GM12878 (cell line): ENCODE measurements at regions of chr12 and their contacts with region 1.

Region 1: DNA sequence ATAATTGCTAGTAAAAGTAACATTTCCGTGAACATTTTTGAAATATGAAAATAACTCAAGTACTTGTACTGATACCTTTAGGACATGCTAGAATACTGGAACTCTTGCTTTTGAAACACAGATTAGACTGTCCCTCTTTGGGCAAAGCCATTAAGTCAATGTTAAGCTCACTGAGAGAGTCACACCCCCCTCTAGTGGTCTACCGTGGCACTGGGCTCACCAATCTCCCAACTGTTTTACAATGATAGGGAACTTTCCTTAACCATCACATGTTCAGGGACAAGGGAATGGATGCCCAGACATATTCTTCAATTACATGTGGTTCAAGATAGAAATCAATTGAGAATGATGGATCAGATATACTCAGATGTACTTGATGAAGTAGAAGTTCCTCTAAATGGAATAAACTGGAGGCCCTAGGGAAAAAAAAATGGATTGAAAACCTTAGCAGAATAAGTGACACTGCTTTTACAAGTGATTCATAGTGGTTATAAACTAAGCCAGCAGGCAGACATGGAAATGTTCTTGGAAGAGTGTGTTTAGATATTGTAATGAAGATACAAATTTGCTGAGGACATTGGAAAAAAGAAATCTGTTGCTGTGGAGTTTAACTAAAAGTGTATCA is 17.8 kb downstream of the NANOG start:
- DNase-seq: peak; percentile 13
- ATAC-seq: peak; percentile 89
- H3K4me3 ChIP-seq: no peak overlapping the region
- H3K27ac ChIP-seq: no peak overlapping the region
- H3K4me1 ChIP-seq: no peaks in the 10 kb centered on the region
- H3K27me3 ChIP-seq: no peaks in the 10 kb centered on the region
- CTCF ChIP-seq: peak; percentile 88 to 97 (median 91)
- EP300 ChIP-seq: no peak
- POLR2A ChIP-seq: no peak
- RAD21 ChIP-seq: peak; percentile 93

Region 2: DNA sequence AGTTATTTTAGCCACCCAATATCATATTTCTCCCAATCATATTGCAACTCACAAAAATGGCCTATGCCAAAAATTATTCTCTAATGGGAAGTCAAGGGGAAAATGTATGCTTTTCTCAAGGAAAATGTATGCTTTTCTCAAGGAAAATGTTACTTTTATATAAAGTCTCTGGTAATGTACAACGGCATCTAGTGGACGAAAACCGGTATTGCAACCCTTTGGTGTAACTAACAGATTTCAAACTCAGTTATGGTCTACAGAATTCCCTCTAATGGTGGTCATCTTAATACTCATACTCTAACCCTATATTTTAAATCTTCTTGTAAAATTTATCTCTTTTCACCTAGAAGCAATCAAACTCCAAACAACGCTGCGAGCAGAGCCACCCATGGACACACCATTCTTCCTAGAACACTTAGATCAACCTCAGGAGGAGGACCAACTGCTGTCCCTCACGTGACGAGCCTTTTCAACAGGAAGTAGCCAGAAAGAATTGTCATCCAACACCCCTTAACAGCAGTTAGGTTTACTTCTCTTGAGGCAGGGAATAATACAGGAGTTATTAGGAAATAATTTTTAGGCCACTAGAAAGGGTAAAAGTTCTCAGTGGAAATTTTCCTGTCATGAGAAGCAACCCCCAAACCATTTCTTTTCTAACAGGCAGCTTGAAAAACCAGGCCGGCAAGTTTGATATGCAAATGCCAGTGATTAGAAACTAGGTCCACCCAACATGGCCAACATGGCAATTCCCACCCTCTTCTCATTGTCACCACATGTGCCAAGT is 161.4 kb before region 1 on chr12:
- CTCF ChIA-PET with region 1: interaction called, 25 read pairs
- POLR2A ChIA-PET with region 1: no interaction called
- RAD21 ChIA-PET with region 1: interaction called, 6 read pairs
- SMC1A ChIA-PET with region 1: interaction called, 3 read pairs
- in situ Hi-C with region 1: no loop called
- intact Hi-C with region 1: loop called (anchors 10 kb)
- DNase-seq: no peak
- ATAC-seq: peak; percentile 34; the same call in 1 of the 3 replicates
- H3K4me3 ChIP-seq: no peak overlapping the region
- H3K27ac ChIP-seq: no peak overlapping the region
- H3K4me1 ChIP-seq: peaks cover 2% of the 10 kb centered on the region; the same call in 1 of the 2 replicates
- H3K27me3 ChIP-seq: no peaks in the 10 kb centered on the region
- CTCF ChIP-seq: peak; percentile 60 to 84 (median 79)
- EP300 ChIP-seq: no peak
- POLR2A ChIP-seq: no peak
- RAD21 ChIP-seq: peak; percentile 43

Region 3: GRCh38 chr12:7678738-7679137 is 128.2 kb before region 1 on chr12:
- CTCF ChIA-PET with region 1: interaction called, 27 read pairs
- POLR2A ChIA-PET with region 1: no interaction called
- RAD21 ChIA-PET with region 1: interaction called, 3 read pairs
- SMC1A ChIA-PET with region 1: interaction called, 5 read pairs
- in situ Hi-C with region 1: loop called (anchors 5 kb)
- intact Hi-C with region 1: loop called (anchors 1 kb)
- DNase-seq: no peak
- ATAC-seq: no peak
- H3K4me3 ChIP-seq: no peak overlapping the region
- H3K27ac ChIP-seq: no peak overlapping the region
- H3K4me1 ChIP-seq: no peaks in the 10 kb centered on the region
- H3K27me3 ChIP-seq: no peaks in the 10 kb centered on the region
- CTCF ChIP-seq: no peak
- EP300 ChIP-seq: no peak
- POLR2A ChIP-seq: no peak
- RAD21 ChIP-seq: no peak

Region 4: GRCh38 chr12:7716381-7716780 is 90.6 kb before region 1 on chr12:
- CTCF ChIA-PET with region 1: no interaction called
- POLR2A ChIA-PET with region 1: no interaction called
- RAD21 ChIA-PET with region 1: interaction called, 4 read pairs
- SMC1A ChIA-PET with region 1: no interaction called
- in situ Hi-C with region 1: no loop called
- intact Hi-C with region 1: loop called (anchors 5 kb)
- DNase-seq: no peak
- ATAC-seq: no peak
- H3K4me3 ChIP-seq: no peak overlapping the region
- H3K27ac ChIP-seq: no peak overlapping the region
- H3K4me1 ChIP-seq: no peaks in the 10 kb centered on the region
- H3K27me3 ChIP-seq: no peaks in the 10 kb centered on the region
- CTCF ChIP-seq: peak in 2 of 3 experiments; percentile 19 to 33; a peak in 3 of 6 replicates
- EP300 ChIP-seq: no peak
- POLR2A ChIP-seq: no peak
- RAD21 ChIP-seq: peak; percentile 49

Region 5: GRCh38 chr12:7731486-7731885 is 75.5 kb before region 1 on chr12:
- CTCF ChIA-PET with region 1: no interaction called
- POLR2A ChIA-PET with region 1: no interaction called
- RAD21 ChIA-PET with region 1: no interaction called
- SMC1A ChIA-PET with region 1: no interaction called
- in situ Hi-C with region 1: no loop called
- intact Hi-C with region 1: no loop called
- DNase-seq: no peak
- ATAC-seq: no peak
- H3K4me3 ChIP-seq: no peak overlapping the region
- H3K27ac ChIP-seq: no peak overlapping the region
- H3K4me1 ChIP-seq: no peaks in the 10 kb centered on the region
- H3K27me3 ChIP-seq: no peaks in the 10 kb centered on the region; a peak in 1 of 4 replicates
- CTCF ChIP-seq: no peak
- EP300 ChIP-seq: no peak
- POLR2A ChIP-seq: no peak
- RAD21 ChIP-seq: no peak

Region 6: GRCh38 chr12:7832059-7832696 is 25.2 kb after region 1 on chr12:
- CTCF ChIA-PET with region 1: no interaction called
- POLR2A ChIA-PET with region 1: no interaction called
- RAD21 ChIA-PET with region 1: no interaction called
- SMC1A ChIA-PET with region 1: no interaction called
- in situ Hi-C with region 1: no loop called
- intact Hi-C with region 1: no loop called
- DNase-seq: no peak
- ATAC-seq: peak; percentile 91
- H3K4me3 ChIP-seq: no peak overlapping the region
- H3K27ac ChIP-seq: no peak overlapping the region
- H3K4me1 ChIP-seq: no peaks in the 10 kb centered on the region
- H3K27me3 ChIP-seq: no peaks in the 10 kb centered on the region
- CTCF ChIP-seq: peak; percentile 16 to 54 (median 47); a peak in 4 of 6 replicates
- EP300 ChIP-seq: no peak
- POLR2A ChIP-seq: no peak
- RAD21 ChIP-seq: no peak